Common myeloid progenitor, CD34-positive (primary cell): ENCODE measurements at regions of chr3 and their contacts with region 1.

Region 1: DNA sequence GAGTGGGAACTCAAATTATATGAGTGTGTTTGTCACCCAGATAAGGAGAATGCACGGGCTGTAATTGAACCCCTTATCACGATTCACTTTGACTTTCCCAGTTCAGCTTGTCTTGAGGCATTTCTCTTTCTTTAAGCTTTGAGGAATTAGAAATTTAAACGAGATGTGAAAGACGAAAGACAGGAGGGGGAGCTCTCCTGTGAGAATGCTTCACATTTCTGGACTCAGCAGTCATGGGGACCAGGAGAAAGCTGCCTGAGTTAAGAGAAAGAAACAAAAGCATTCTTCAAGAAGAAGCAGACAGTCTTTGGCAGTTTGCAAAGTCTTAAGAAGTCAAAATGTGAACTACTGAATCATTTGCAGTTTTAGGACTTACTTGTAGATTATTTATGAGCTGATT is 205.6 kb downstream of the NECTIN3 start:
- DNase-seq: peak; percentile 14 to 53 (median 40)
- H3K4me3 ChIP-seq: no peak overlapping the region
- H3K27ac ChIP-seq: no peak overlapping the region
- H3K4me1 ChIP-seq: peaks cover 0 to 3% (median 0%) of the 10 kb centered on the region in 4 experiments
- H3K27me3 ChIP-seq: no peaks in the 10 kb centered on the region

Region 2: DNA sequence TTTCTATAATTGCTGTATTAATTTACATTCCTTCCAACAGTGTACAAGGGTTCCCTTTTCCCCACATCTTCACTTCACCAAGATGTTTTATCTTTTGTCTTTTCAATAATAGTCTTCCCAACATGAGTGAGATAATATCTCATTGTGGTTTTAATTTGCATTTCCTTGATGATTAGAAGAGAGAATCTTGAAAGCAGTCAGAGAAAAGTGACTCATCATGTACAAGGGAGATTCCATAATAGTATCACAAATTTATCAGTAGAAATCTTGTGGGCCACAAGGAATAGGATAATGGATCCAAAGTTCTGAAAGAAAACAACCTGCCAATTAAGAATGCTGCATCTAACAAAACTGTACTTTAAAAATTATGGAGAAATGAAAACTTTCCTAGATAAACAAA is 16.3 kb before region 1 on chr3:
- CTCF ChIA-PET with region 1: no interaction called
- POLR2A ChIA-PET with region 1: no interaction called
- DNase-seq: no peak
- H3K4me3 ChIP-seq: no peak overlapping the region
- H3K27ac ChIP-seq: no peak overlapping the region
- H3K4me1 ChIP-seq: no peaks in the 10 kb centered on the region
- H3K27me3 ChIP-seq: no peaks in the 10 kb centered on the region

Region 3: GRCh38 chr3:111338059-111338698 is 61.0 kb after region 1 on chr3:
- CTCF ChIA-PET with region 1: interaction called, 13 read pairs
- POLR2A ChIA-PET with region 1: no interaction called
- DNase-seq: peak; percentile 57 to 71 (median 58)
- H3K4me3 ChIP-seq: no peak overlapping the region
- H3K27ac ChIP-seq: no peak overlapping the region
- H3K4me1 ChIP-seq: peaks cover 0 to 17% (median 10%) of the 10 kb centered on the region in 4 experiments
- H3K27me3 ChIP-seq: no peaks in the 10 kb centered on the region

Region 4: GRCh38 chr3:111351334-111351733 is 74.1 kb after region 1 on chr3:
- CTCF ChIA-PET with region 1: no interaction called
- POLR2A ChIA-PET with region 1: no interaction called
- DNase-seq: no peak
- H3K4me3 ChIP-seq: no peak overlapping the region
- H3K27ac ChIP-seq: no peak overlapping the region
- H3K4me1 ChIP-seq: no peaks in the 10 kb centered on the region
- H3K27me3 ChIP-seq: no peaks in the 10 kb centered on the region